Sciatic nerve (tissue), 2 donors: ENCODE measurements at regions of chr10 and their contacts with region 1.

Region 1: GRCh38 chr10:49164559-49165188 is 23.5 kb downstream of the TMEM273 start:
- DNase-seq: peak; percentile 62
- ATAC-seq: peak; percentile 51

Region 2: GRCh38 chr10:48981310-48981907 is 183.3 kb before region 1 on chr10:
- intact Hi-C with region 1: loop called (anchors 5 kb)
- DNase-seq: peak; percentile 73
- ATAC-seq: peak; percentile 80

Region 3: DNA sequence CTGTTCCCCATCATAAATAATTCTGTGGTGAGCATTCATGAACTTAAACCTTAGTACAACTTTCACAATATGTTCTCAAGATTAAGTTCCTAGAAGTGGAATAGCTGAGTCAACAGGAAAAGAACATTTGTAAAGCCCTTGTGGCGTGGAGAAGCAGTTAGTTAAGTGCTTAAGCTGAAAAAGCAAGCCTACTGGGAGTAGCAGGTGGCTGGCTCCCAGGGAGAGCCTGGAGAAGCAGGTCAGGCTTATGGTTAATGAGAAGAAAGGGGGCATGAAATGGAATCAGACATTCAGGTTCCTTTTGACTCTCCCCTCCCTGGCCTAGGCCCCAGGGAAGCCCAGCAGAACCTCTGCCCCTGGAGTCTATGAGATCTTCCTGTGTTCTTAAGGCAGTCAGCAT is 84.6 kb before region 1 on chr10:
- intact Hi-C with region 1: no loop called
- DNase-seq: no peak
- ATAC-seq: peak; percentile 72

Region 4: DNA sequence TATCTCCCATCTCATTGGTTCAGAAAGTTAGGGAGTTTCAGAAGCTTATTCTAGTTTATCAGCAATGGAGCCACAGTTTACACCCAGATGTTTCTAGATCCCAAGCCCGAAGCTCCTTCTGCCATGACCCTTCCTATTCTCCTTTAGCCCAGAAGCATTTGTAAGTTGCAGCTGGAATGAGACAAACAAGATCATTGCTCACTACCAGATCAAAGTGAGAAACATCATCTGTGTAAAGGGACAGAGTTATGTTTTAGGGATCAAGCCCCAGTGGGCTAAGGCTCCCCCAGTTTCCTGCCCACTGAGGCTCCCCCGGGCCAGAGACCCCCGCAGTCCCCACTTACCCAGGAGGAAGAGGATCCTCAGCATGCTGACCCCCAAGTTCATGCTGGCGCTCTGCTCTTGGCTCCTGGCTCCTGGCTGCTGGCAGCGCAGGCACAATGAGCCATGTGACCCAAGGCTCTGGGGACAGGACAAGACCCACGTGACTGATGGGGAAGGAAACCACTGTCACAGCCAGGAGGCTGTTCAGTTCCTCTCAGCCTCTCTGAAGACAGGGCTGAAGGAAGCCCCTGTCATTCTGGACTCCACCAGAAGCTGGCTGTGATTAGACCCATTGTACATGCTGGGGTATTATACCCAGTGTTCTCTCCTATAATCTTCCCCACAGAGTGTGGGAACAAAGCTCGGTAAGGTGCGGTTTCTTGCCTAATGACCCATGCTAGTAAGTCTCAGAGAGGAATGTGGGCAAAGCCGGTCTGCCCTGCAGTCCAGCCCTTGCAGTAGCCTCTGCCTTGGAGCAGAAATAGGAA is 23.5 kb after region 1 on chr10 and contains the start of gene TMEM273:
- intact Hi-C with region 1: no loop called
- DNase-seq: peak; percentile 82
- ATAC-seq: peak; percentile 97
- total RNA-seq, gene TMEM273: 35.1 TPM

Region 5: DNA sequence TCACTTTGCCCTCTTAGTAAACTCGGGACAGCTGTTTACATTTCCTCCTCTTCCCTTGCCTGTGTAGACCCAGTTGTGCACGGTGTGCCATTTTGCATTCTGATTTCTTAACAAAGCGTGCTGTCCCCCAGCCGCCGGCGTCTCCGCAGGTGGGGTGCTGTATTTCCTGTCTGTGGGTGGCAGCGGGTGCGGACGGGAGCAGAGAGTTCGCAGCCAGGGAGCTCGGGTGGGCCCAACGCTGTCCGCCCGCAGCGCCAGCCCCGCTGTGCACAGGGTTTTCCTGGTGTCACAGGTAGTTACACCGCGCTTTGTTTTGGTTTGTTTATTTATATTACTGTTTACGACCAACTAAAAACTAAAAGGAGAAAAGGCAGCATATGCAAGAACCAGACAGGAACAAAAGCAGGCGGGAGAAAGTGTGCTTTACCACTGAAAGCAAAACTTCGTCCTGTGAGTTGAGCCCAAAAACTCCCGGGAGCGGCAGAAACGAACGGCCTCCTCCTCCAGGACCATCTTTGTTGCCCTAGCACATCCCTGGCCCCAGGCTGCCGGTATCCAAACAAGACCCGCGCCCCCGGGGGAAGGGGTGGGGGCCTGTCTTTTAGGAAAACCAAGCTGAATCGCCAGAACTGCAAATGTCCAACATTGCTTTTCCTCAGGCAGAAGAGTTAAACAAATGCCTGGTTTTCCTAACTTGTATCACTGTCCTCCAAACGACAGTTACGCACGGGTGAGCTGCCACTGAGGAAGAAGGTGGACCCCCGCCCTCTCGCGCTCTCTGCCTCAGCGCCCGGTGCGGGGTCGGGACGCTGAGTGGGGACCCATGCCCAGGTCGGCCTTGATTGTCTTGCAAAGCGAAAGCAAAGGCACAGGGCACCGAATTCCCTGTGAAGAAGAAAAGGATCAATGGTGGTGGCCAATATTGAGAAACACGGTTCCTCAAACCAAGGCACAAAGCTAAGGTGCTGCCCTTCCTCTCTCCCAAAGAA is 277.1 kb after region 1 on chr10:
- intact Hi-C with region 1: no loop called
- DNase-seq: no peak
- ATAC-seq: no peak

Region 6: DNA sequence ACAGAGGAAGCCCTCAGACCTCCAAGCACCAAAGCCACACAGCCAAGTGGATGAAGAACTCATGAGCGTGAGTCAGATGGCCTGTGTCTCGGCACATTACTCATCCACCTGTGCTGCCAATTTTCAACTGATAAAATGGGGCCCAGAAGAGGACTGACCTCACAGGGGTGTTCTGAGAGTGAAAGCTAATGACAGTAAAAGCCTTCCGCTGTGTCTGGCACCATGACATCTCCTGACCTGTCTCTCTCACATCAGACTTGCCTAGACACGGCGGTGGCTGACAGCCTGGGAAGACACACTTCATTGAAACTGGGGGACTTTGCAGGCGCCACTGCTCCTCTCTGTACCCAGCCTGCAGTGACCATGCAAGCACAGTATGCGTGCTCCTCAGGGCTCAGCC is 437.2 kb after region 1 on chr10:
- intact Hi-C with region 1: loop called (anchors 5 kb)
- DNase-seq: no peak
- ATAC-seq: no peak